A673 (cell line): ENCODE measurements at regions of chr2 and their contacts with region 1.

Region 1: GRCh38 chr2:200306196-200306930 is at the start of gene SPATS2L:
- DNase-seq: peak; percentile 60
- H3K4me3 ChIP-seq: peak within 1 kb of the TSS; percentile 59
- H3K27ac ChIP-seq: no peak within 1 kb of the TSS
- H3K4me1 ChIP-seq: peaks cover 10% of the 10 kb centered on the region
- H3K27me3 ChIP-seq: peaks cover 11% of the 10 kb centered on the region
- CTCF ChIP-seq: no peak
- total RNA-seq, gene SPATS2L: 10.0 and 13.7 TPM in 2 replicates

Region 2: DNA sequence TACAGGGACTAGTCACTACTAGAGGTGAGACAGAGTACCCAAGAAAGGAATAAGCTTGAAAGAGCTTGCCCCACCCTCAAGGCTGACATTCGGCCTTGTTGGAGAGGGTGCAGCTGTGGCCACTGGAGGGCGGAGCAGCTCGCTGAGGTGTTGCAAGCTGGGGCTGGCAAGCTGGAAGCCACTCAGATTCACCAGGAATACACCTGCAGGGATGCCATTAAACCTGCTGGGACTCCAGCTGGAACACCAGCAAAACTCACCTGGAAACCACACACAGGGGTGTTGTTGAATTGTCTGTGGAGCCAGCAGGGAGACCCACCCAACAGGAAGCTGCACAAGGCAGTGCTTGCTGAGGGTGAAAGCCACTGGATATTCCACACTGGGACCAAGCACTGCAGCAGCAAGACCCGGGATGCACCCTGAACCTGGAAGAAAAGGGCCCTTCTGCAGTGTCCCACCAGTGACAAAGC is 177.4 kb after region 1 on chr2:
- CTCF ChIA-PET with region 1: interaction called, 3 read pairs
- POLR2A ChIA-PET with region 1: no interaction called
- intact Hi-C with region 1: loop called (anchors 5 kb)
- DNase-seq: peak; percentile 40
- H3K4me3 ChIP-seq: no peak overlapping the region
- H3K27ac ChIP-seq: no peak overlapping the region
- H3K4me1 ChIP-seq: no peaks in the 10 kb centered on the region
- H3K27me3 ChIP-seq: no peaks in the 10 kb centered on the region
- CTCF ChIP-seq: peak; percentile 59